Left lung (tissue), 14 donors: ENCODE measurements at regions of chr9 and their contacts with region 1.

Region 1: DNA sequence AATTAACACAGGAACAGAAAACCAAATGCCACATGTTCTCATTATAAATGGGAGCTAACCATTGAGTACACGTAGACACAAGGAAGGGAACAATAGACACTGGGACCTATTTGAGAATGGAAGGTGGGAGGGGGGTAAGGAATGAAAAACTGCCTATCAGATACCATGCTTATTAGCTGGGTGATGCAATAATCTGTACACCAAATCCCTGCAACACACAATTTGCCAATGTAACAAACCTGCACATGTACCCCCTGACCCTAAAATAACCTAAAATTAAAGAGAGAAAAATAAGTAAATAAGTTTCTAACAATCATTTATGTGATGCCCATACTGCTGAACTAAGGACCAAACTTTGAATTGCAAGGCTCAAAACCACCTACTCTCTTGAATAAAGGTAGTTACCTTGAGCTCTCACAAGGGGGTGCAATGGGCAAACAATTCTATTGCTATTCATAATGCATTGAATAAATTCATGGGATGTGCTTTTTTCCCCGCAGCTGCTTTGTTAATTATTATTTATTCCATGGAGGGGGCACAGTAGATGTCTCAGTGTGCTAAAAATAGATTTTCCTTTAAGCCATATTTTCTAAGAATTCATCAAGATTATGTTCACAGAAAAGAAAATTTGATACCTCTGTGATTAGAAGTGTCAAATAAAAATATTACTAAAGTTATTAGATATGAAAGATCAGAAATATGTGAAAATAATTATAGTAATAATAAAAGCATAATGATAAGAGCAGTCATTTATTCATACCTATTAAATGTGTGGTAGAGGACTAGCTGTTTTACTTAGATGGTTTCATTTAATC is 76.2 kb upstream of the PTPN3 start:
- DNase-seq: peak in 2 of 4 donors; percentile 55 to 78
- ATAC-seq: peak; percentile 90
- H3K4me3 ChIP-seq: no peak overlapping the region
- H3K27ac ChIP-seq: no peak overlapping the region
- H3K4me1 ChIP-seq: no peaks in the 10 kb centered on the region
- H3K27me3 ChIP-seq: no peaks in the 10 kb centered on the region
- CTCF ChIP-seq: peak; percentile 43 to 50

Region 2: DNA sequence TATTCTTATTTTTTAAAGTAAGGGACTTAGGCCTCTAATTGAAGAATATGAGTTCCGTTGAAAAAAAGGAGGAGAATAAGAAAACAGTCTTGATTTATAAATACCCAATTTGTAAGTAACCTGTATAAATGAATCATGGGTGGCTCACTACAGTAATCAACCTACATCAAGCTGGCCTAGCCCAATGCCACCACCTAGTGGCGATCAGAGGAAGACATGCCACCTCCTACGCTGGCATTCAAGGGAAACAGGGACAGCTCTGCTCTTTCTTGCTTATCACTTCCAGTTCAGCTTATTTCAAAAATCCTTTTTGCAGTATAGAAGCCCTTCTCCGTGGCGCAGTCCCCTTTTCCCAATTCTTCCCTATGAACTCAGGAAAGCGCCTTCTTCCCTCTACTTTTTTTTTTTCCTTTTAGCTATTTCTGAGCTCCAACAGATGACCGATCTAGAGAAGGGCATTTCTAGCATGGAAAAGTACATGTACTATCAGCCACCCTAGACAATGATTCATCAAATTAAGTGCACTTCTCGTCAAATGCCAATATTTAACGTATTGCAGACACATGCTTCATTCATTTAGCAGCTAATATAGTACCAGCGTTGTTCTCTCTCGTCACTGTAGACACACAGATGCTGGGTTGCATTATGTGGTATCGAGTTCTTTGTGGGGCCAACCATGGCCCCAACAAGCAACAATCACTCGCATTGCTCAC is 104.5 kb before region 1 on chr9:
- intact Hi-C with region 1: no loop called
- DNase-seq: peak in 3 of 4 donors; percentile 36 to 71 (median 63)
- ATAC-seq: peak; percentile 97
- H3K4me3 ChIP-seq: no peak overlapping the region
- H3K27ac ChIP-seq: no peak overlapping the region
- H3K4me1 ChIP-seq: peaks cover 0 to 12% of the 10 kb centered on the region in 2 donors
- H3K27me3 ChIP-seq: peaks cover 0 to 52% of the 10 kb centered on the region in 2 donors
- CTCF ChIP-seq: peak; percentile 85 to 86

Region 3: GRCh38 chr9:109817846-109818472 is 243.7 kb after region 1 on chr9:
- intact Hi-C with region 1: loop called in 1 of 2 experiments (anchors 10 kb)
- DNase-seq: peak in 3 of 4 donors; percentile 44 to 96 (median 93)
- ATAC-seq: peak; percentile 95
- H3K4me3 ChIP-seq: no peak overlapping the region
- H3K27ac ChIP-seq: peak overlapping the region in 1 of 2 donors; percentile 34
- H3K4me1 ChIP-seq: no peaks in the 10 kb centered on the region
- H3K27me3 ChIP-seq: no peaks in the 10 kb centered on the region
- CTCF ChIP-seq: peak; percentile 62 to 80